Adrenal gland (tissue), 19 donors: ENCODE measurements at regions of chr20 and their contacts with region 1.

Region 1: GRCh38 chr20:9407805-9408421 is 106.5 kb upstream of the LAMP5 start:
- DNase-seq: peak; percentile 43 to 88 (median 68)
- H3K4me3 ChIP-seq: no peak overlapping the region
- H3K27ac ChIP-seq: no peak overlapping the region
- H3K4me1 ChIP-seq: no peaks in the 10 kb centered on the region
- H3K27me3 ChIP-seq: no peaks in the 10 kb centered on the region
- CTCF ChIP-seq: peak; percentile 86 to 92 (median 90)
- POLR2A ChIP-seq: no peak

Region 2: DNA sequence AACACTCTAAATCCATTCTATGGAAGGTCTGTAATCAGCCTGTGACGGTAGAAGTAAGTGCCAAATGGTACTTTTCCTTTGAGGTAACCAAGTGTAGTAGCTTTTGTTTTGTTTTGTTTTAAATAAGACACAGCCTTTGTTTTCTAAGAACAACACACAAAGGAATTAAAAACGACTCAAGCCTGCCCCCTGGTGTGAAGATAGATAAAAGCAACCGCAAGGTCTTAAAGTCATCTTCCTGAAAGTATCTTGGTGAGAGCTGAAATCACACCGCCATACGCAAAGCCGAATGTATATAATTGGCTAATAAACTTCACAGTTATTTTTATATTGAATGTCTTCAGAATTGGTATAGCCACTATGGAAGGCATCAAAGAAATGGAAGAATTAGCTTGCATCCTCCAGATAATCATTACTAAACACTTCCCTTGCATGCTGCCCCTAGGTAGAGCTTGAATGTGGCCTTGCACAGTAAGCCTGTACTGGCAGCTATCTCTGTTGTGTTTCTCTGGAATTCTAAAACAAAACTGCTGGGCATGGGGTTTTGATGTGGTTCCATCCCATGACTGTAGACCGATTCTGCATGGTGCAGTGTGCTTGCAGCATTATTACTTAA is 202.1 kb after region 1 on chr20:
- intact Hi-C with region 1: loop called (anchors 2 to 10 kb)
- DNase-seq: peak; percentile 55 to 88 (median 69)
- H3K4me3 ChIP-seq: no peak overlapping the region
- H3K27ac ChIP-seq: no peak overlapping the region
- H3K4me1 ChIP-seq: no peaks in the 10 kb centered on the region
- H3K27me3 ChIP-seq: no peaks in the 10 kb centered on the region
- CTCF ChIP-seq: peak; percentile 62 to 83 (median 72)
- POLR2A ChIP-seq: no peak